Sciatic nerve (tissue), 2 donors: ENCODE measurements at regions of chr17 and their contacts with region 1.

Region 1: GRCh38 chr17:62761917-62762316 is 46.2 kb downstream of the MARCHF10 start:
- DNase-seq: no peak
- ATAC-seq: no peak

Region 2: DNA sequence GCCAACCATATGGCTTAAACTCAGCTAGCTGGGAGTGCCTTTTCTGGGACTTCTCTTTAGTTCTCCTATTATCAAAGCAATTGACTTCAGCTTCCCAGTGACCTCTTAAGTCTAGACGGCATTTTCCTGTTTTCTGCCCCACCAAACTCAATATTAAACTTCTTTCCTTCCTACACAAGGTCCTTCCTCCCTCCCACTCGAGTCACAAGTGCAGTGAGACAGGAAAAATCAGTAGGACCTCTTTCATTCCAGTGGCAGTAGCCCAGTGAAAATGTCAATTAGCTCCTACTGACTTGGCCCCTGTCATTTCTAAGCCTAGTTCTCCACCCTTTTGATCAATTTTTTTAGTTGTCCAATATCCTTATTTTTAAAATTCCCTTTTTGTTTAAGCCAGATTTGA is 1161.3 kb before region 1 on chr17:
- intact Hi-C with region 1: loop called (anchors 10 kb)
- DNase-seq: no peak
- ATAC-seq: no peak